ENCODE measurements at regions of chr1 and their contacts with region 1.

Region 1: GRCh38 chr1:208093754-208094719 is 150.1 kb downstream of the PLXNA2 start:
- DNase-seq: peak in 6 of 10 donors; percentile 58 to 92 (median 68)

Region 2: GRCh38 chr1:208029381-208030287 is 64.4 kb before region 1 on chr1:
- intact Hi-C with region 1: loop called (anchors 5 kb)
- DNase-seq: no peak

Region 3: DNA sequence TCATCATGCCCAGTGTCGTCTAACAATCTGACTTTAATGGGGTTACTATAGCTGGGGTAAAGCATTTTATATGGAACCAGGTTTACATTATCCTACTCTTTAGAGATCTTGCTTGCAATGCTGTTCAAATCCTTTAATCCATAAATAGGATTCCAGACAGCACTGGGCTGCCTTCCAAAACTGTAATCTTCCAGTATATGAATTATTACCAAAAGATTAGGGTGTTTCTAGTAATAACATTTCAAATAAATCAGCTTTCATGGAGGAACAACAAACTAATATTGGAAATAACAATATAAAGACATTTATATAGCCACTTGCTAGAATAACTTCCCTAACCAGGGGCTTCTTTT is 238.7 kb after region 1 on chr1:
- intact Hi-C with region 1: no loop called
- DNase-seq: no peak